GM12878 (cell line): ENCODE measurements at regions of chr17 and their contacts with region 1.

Region 1: GRCh38 chr17:7484067-7484918 is at the start of gene POLR2A:
- DNase-seq: peak; percentile 95
- ATAC-seq: peak; percentile 76
- H3K4me3 ChIP-seq: peak within 1 kb of the TSS; percentile 99
- H3K27ac ChIP-seq: peak within 1 kb of the TSS; percentile 100
- H3K4me1 ChIP-seq: no peaks in the 10 kb centered on the region; the same call in 1 of the 2 replicates
- H3K27me3 ChIP-seq: no peaks in the 10 kb centered on the region
- CTCF ChIP-seq: no peak
- EP300 ChIP-seq: peak in 1 of 2 experiments; percentile 63; a peak in 3 of 4 replicates
- POLR2A ChIP-seq: peak; percentile 98
- RAD21 ChIP-seq: no peak
- polyA plus RNA-seq, gene POLR2A: 1.7 to 2.8 TPM

Region 2: DNA sequence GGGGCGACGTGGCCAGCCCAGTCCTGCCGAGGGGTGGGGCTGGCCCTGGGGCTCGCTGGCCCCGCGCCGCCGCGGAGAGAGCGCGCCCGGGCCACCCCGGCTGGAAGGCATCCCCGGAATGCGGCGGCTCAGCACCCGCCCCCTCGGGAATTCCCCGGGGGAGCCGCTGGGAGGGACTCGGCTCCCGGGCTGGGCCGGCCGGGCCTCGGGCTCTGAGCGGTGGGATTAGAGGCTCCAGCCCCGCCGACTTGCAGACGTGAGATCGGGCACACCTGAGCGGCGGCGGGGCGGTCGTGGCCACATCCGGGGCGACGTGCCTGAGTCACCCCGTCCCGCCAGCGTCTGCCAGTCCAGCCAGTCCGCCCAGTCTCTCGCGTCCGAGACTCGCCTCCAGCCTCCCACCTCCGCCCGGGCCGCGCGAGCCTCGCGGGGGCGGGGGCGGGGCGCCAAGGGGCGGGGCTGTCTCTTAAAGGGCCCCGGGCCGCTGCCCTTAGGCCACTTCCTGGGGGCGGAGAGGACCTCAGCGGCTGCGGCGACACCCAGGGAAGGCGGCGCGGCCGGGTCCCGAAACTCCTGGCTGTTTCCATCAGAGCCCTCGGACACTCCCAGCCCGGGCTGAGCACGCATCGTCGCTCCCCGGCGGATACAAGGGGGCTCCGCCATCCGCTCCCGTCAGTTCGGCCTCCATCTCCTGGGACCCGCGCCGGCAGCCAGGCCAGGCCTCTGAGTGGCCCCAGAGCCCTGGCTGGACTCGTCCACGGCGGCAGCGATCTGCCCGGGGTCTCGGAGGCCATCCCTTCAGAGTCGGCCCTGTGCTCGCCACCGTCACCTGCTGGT is 132.4 kb before region 1 on chr17 and contains the start of gene KCTD11:
- CTCF ChIA-PET with region 1: interaction called, 13 read pairs
- POLR2A ChIA-PET with region 1: interaction called, 3 read pairs
- RAD21 ChIA-PET with region 1: interaction called, 4 read pairs
- SMC1A ChIA-PET with region 1: interaction called, 4 read pairs
- in situ Hi-C with region 1: no loop called
- intact Hi-C with region 1: no loop called
- DNase-seq: no peak
- ATAC-seq: peak; percentile 81
- H3K4me3 ChIP-seq: peak within 1 kb of the TSS; percentile 88
- H3K27ac ChIP-seq: peak within 1 kb of the TSS; percentile 59
- H3K4me1 ChIP-seq: peaks cover 23% of the 10 kb centered on the region
- H3K27me3 ChIP-seq: no peaks in the 10 kb centered on the region
- CTCF ChIP-seq: peak in 2 of 3 experiments; percentile 55 to 59; a peak in 3 of 6 replicates
- EP300 ChIP-seq: no peak
- POLR2A ChIP-seq: peak; percentile 81
- RAD21 ChIP-seq: 0 out of 2 replicates have a peak, but pooled peaks have one; percentile 27
- polyA plus RNA-seq, gene KCTD11: 0.05 to 0.09 TPM

Region 3: GRCh38 chr17:7444682-7445618 is 39.3 kb before region 1 on chr17 and contains the start of gene CHRNB1:
- CTCF ChIA-PET with region 1: interaction called, 3 read pairs
- POLR2A ChIA-PET with region 1: interaction called, 63 read pairs
- RAD21 ChIA-PET with region 1: interaction called, 11 read pairs
- SMC1A ChIA-PET with region 1: interaction called, 8 read pairs
- in situ Hi-C with region 1: no loop called
- intact Hi-C with region 1: no loop called
- DNase-seq: no peak
- ATAC-seq: peak; percentile 71
- H3K4me3 ChIP-seq: peak within 1 kb of the TSS; percentile 55; the same call in 1 of the 2 replicates
- H3K27ac ChIP-seq: no peak within 1 kb of the TSS
- H3K4me1 ChIP-seq: peaks cover 16% of the 10 kb centered on the region
- H3K27me3 ChIP-seq: peaks cover 1 to 5% of the 10 kb centered on the region in 2 experiments; a peak in 3 of 4 replicates
- CTCF ChIP-seq: peak in 1 of 3 experiments; percentile 11; a peak in 1 of 6 replicates
- EP300 ChIP-seq: no peak
- POLR2A ChIP-seq: no peak
- RAD21 ChIP-seq: no peak
- polyA plus RNA-seq, gene CHRNB1: 13.2 to 14.8 TPM

Region 4: DNA sequence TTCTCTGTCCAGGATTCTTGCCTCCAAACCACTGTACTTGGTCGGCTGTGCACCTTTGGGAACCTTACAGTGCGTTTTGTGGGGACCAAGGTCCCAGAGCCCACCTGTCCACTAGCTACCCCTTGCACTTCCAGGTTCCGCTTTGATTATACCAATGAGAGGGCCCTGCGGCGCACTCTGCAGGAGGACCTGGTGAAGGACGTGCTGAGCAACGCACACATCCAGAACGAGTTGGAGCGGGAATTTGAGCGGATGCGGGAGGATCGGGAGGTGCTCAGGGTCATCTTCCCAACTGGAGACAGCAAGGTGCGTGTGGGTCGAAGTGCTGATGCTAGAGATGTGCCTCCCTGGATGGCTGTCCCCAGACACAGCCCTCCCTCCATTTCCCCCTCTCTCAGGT is 18.7 kb after region 1 on chr17:
- CTCF ChIA-PET with region 1: no interaction called
- POLR2A ChIA-PET with region 1: interaction called, 10 read pairs
- RAD21 ChIA-PET with region 1: no interaction called
- SMC1A ChIA-PET with region 1: interaction called, 6 read pairs
- in situ Hi-C with region 1: no loop called
- intact Hi-C with region 1: no loop called
- DNase-seq: no peak
- ATAC-seq: no peak
- H3K4me3 ChIP-seq: no peak overlapping the region
- H3K27ac ChIP-seq: no peak overlapping the region
- H3K4me1 ChIP-seq: no peaks in the 10 kb centered on the region
- H3K27me3 ChIP-seq: no peaks in the 10 kb centered on the region
- CTCF ChIP-seq: peak; percentile 17 to 31 (median 25); a peak in 4 of 6 replicates
- EP300 ChIP-seq: no peak
- POLR2A ChIP-seq: no peak
- RAD21 ChIP-seq: peak; percentile 47

Region 5: DNA sequence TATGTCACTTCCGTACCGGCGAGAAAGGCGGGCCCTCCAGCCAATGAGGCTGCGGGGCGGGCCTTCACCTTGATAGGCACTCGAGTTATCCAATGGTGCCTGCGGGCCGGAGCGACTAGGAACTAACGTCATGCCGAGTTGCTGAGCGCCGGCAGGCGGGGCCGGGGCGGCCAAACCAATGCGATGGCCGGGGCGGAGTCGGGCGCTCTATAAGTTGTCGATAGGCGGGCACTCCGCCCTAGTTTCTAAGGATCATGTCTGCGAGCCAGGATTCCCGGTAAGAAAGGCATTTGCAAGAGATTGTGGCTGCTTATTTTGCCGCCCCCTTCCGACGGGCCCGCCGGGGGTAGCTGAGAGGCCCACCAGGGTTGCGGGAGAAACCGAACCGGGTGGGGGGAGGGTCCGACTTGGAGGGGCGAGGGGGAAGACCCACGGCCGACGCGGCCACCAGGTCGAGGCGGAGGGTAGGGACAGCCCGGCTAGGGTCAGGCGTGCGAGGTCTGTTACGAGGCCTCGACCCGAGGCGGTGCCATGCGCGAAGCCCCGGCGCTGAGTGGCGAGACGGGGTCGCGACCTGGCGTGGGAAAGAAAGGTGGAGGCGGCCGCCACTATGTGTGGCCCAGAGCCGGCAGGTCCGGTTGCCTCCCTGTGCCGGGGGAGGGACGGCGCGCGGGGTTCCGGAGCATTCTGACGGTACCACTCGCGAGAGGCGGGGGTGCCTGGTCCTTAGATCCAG is 88.5 kb after region 1 on chr17:
- CTCF ChIA-PET with region 1: interaction called, 3 read pairs
- POLR2A ChIA-PET with region 1: no interaction called
- RAD21 ChIA-PET with region 1: no interaction called
- SMC1A ChIA-PET with region 1: no interaction called
- in situ Hi-C with region 1: no loop called
- intact Hi-C with region 1: loop called (anchors 1 kb)
- DNase-seq: peak; percentile 98
- ATAC-seq: peak; percentile 0
- H3K4me3 ChIP-seq: peak overlapping the region; percentile 93
- H3K27ac ChIP-seq: peak overlapping the region; percentile 97
- H3K4me1 ChIP-seq: peaks cover 21% of the 10 kb centered on the region
- H3K27me3 ChIP-seq: no peaks in the 10 kb centered on the region
- CTCF ChIP-seq: no peak
- EP300 ChIP-seq: no peak
- POLR2A ChIP-seq: peak; percentile 85
- RAD21 ChIP-seq: no peak